ENCODE measurements at regions of chrX and their contacts with region 1.

Region 1: DNA sequence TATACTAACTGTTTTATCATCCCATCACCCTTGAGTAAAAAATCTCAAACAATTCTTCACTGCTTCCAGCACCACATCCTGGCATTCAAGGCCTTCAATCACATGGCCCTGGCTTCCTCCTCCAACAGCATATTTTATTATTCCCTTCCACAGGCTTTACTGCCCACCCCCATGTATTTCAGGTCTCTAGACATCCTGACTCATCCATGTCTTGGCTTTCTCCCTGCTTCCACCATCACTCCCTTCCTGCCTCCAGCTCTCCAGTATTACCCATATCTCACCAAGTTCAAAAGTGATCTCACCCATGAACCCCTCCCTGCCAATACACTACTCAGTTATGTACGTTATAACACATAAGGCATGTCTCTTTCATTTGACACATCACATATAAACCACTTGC is 34.7 kb upstream of the PLAC1 start:
- DNase-seq: no peak
- ATAC-seq: no peak
- H3K4me3 ChIP-seq: no peak overlapping the region
- H3K27ac ChIP-seq: no peak overlapping the region
- H3K4me1 ChIP-seq: peaks cover 5 to 14% of the 10 kb centered on the region in 2 donors
- H3K27me3 ChIP-seq: no peaks in the 10 kb centered on the region
- CTCF ChIP-seq: no peak
- POLR2A ChIP-seq: no peak

Region 2: GRCh38 chrX:134572816-134573682 is 119.9 kb before region 1 on chrX:
- in situ Hi-C with region 1: no loop called
- intact Hi-C with region 1: loop called (anchors 5 kb)
- DNase-seq: no peak
- ATAC-seq: no peak
- H3K4me3 ChIP-seq: no peak overlapping the region
- H3K27ac ChIP-seq: no peak overlapping the region
- H3K4me1 ChIP-seq: peaks cover 6 to 7% of the 10 kb centered on the region in 2 donors
- H3K27me3 ChIP-seq: no peaks in the 10 kb centered on the region
- CTCF ChIP-seq: no peak
- POLR2A ChIP-seq: no peak

Region 3: GRCh38 chrX:134737061-134737460 is 44.1 kb after region 1 on chrX:
- in situ Hi-C with region 1: no loop called
- intact Hi-C with region 1: loop called (anchors 2 kb)
- DNase-seq: peak; percentile 26 to 33
- ATAC-seq: peak; percentile 88
- H3K4me3 ChIP-seq: no peak overlapping the region
- H3K27ac ChIP-seq: no peak overlapping the region
- H3K4me1 ChIP-seq: peaks cover 0 to 3% of the 10 kb centered on the region in 2 donors
- H3K27me3 ChIP-seq: no peaks in the 10 kb centered on the region
- CTCF ChIP-seq: no peak
- POLR2A ChIP-seq: no peak